Heart left ventricle (tissue), 16 donors: ENCODE measurements at regions of chr10 and their contacts with region 1.

Region 1: GRCh38 chr10:104034401-104035193 is 51.1 kb downstream of the COL17A1 start:
- DNase-seq: peak in 1 of 5 donors; percentile 21
- ATAC-seq: peak in 2 of 4 donors; percentile 11 to 26
- H3K4me3 ChIP-seq: no peak overlapping the region
- H3K27ac ChIP-seq: no peak overlapping the region
- H3K4me1 ChIP-seq: peaks cover 0 to 16% (median 4%) of the 10 kb centered on the region in 12 donors
- H3K27me3 ChIP-seq: no peaks in the 10 kb centered on the region
- CTCF ChIP-seq: no peak
- POLR2A ChIP-seq: no peak

Region 2: DNA sequence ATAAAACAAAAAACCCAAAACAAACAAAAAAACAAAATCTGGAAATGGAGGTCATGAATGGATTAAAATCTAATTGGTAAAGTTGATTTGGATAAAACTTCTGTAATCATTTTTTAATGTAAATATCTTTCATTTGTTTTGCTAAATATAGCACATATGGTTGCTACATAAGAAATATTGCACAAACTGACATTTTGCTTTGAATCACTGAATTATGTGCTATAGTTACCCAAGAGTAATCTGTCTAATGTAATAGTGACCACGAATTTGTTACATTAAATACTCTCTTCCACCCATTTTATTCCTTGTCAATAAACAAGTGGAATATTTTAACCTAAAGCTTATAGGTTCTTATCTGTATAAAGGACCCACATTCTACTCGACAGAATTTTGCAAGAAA is 325.2 kb after region 1 on chr10:
- intact Hi-C with region 1: loop called in 1 of 10 experiments (anchors 5 kb)
- DNase-seq: no peak
- ATAC-seq: no peak
- H3K4me3 ChIP-seq: no peak overlapping the region
- H3K27ac ChIP-seq: no peak overlapping the region
- H3K4me1 ChIP-seq: peaks cover 0 to 6% (median 0%) of the 10 kb centered on the region in 12 donors
- H3K27me3 ChIP-seq: no peaks in the 10 kb centered on the region
- CTCF ChIP-seq: no peak
- POLR2A ChIP-seq: no peak

Region 3: DNA sequence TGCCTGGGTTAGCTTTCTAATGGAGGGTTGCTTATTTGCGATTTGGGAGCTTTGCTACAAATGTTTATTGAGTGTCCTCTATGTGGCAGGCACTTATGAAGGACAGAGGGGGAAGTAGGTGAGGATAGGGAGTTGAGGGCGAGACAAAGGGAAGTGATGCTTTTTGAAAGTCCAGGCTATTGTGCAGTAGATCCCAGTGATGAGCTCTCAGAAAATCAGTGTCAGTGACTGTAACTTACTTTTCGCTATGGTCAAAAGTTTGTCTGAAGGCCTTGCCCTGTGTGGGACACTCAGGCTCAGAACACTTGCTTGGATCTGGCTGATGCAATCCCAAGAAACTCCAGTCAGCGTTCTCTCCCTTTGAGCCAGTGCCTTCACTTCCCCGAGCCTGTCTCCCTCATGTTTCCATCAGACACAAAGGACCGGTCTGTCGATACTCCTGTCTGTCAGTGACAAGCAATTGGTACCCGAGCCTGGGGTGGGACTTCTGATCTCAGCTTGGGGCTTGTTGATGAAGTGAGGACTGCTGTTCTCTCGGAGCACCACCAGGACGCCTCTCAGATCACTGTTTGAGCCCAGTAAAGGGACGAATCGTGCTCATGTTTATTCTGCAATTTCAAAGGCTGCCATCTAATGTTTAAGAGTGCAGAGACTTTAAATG is 543.4 kb after region 1 on chr10:
- intact Hi-C with region 1: no loop called
- DNase-seq: no peak
- ATAC-seq: no peak
- H3K4me3 ChIP-seq: no peak overlapping the region
- H3K27ac ChIP-seq: no peak overlapping the region
- H3K4me1 ChIP-seq: peaks cover 0 to 12% (median 0%) of the 10 kb centered on the region in 12 donors
- H3K27me3 ChIP-seq: peaks cover 0 to 45% (median 10%) of the 10 kb centered on the region in 9 donors
- CTCF ChIP-seq: no peak
- POLR2A ChIP-seq: no peak